IMR-90 (cell line): ENCODE measurements at regions of chr12 and their contacts with region 1.

Region 1: DNA sequence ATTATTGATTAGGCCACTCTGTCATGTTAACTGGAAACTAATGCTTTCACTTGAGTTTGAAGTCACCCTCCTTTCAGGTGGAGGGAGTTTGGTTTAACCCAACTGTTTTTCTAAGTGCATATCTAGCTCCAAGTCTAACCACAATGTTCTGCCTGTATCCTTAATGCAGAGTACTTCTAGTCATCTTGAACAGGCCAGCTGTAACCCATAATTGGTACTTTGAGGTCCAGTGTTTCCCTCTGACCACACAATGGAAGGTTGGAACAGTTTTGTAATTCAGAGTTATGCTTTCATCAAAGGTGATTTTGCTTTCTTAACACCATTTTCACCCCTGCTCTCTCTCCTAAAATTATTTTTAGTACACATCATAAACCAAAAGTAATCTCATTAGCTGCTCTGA is 237.2 kb upstream of the DCN start:
- DNase-seq: no peak
- ATAC-seq: no peak
- H3K4me3 ChIP-seq: no peak overlapping the region
- H3K27ac ChIP-seq: no peak overlapping the region
- H3K4me1 ChIP-seq: no peaks in the 10 kb centered on the region; the same call in 1 of the 2 replicates
- H3K27me3 ChIP-seq: peaks cover 5% of the 10 kb centered on the region
- CTCF ChIP-seq: no peak
- POLR2A ChIP-seq: no peak
- RAD21 ChIP-seq: no peak

Region 2: GRCh38 chr12:91316907-91317269 is 102.9 kb before region 1 on chr12:
- CTCF ChIA-PET with region 1: no interaction called
- POLR2A ChIA-PET with region 1: no interaction called
- dilution Hi-C with region 1: no loop called
- in situ Hi-C with region 1: no loop called
- intact Hi-C with region 1: no loop called
- DNase-seq: peak; percentile 69
- ATAC-seq: peak; percentile 84
- H3K4me3 ChIP-seq: no peak overlapping the region
- H3K27ac ChIP-seq: peak overlapping the region; percentile 93; the same call in 1 of the 2 replicates
- H3K4me1 ChIP-seq: peaks cover 8% of the 10 kb centered on the region
- H3K27me3 ChIP-seq: no peaks in the 10 kb centered on the region
- CTCF ChIP-seq: no peak
- POLR2A ChIP-seq: no peak
- RAD21 ChIP-seq: no peak

Region 3: GRCh38 chr12:91502208-91502607 is 82.4 kb after region 1 on chr12:
- CTCF ChIA-PET with region 1: no interaction called
- POLR2A ChIA-PET with region 1: no interaction called
- dilution Hi-C with region 1: no loop called
- in situ Hi-C with region 1: no loop called
- intact Hi-C with region 1: loop called (anchors 5 kb)
- DNase-seq: no peak
- ATAC-seq: no peak
- H3K4me3 ChIP-seq: no peak overlapping the region
- H3K27ac ChIP-seq: no peak overlapping the region
- H3K4me1 ChIP-seq: no peaks in the 10 kb centered on the region
- H3K27me3 ChIP-seq: no peaks in the 10 kb centered on the region; the same call in 1 of the 2 replicates
- CTCF ChIP-seq: no peak
- POLR2A ChIP-seq: no peak
- RAD21 ChIP-seq: no peak

Region 4: DNA sequence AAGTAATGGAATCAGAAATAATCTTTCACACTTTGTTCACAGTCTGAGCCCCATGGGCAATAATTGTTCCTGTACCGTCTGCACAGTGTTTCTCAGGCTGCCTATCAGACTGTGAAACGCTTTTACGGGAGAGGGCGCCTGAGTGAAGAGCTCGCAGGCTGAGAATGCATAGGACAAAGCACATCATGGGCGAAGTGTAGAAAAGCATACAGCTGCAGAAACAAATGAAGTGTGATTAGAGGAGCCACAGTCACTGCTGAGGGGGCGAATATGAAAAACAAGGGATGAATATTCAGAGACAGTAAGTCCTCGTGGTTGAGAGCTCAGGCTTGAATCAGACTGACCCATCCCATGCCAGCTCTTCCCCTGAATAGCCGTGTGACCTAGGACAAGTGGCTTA is 201.2 kb after region 1 on chr12:
- CTCF ChIA-PET with region 1: no interaction called
- POLR2A ChIA-PET with region 1: no interaction called
- dilution Hi-C with region 1: no loop called
- in situ Hi-C with region 1: no loop called
- intact Hi-C with region 1: no loop called
- DNase-seq: peak; percentile 12
- ATAC-seq: peak; percentile 85
- H3K4me3 ChIP-seq: no peak overlapping the region
- H3K27ac ChIP-seq: no peak overlapping the region
- H3K4me1 ChIP-seq: no peaks in the 10 kb centered on the region
- H3K27me3 ChIP-seq: no peaks in the 10 kb centered on the region; the same call in 1 of the 2 replicates
- CTCF ChIP-seq: no peak; the same call in 1 of the 2 replicates
- POLR2A ChIP-seq: no peak
- RAD21 ChIP-seq: no peak

Region 5: DNA sequence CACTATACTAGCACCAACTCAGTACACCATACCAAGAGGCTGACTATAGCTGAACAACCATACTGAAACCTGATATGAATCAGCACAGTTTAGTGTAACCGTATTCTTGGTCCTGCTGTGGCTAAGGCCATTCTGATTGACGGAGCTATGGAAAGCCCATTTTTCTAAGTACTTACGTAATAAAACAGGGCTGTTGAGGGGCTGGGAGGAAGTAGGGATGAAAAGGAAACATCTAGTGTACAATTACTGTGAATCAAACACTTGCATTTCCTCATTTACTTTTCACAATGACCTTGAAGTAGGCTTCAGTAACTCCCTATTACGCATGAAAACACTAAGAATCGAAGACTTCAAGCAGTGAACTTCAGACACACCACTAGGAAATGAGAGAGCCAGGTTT is 527.6 kb after region 1 on chr12:
- CTCF ChIA-PET with region 1: no interaction called
- POLR2A ChIA-PET with region 1: no interaction called
- dilution Hi-C with region 1: no loop called
- in situ Hi-C with region 1: no loop called
- intact Hi-C with region 1: no loop called
- DNase-seq: no peak
- ATAC-seq: no peak
- H3K4me3 ChIP-seq: no peak overlapping the region
- H3K27ac ChIP-seq: no peak overlapping the region
- H3K4me1 ChIP-seq: no peaks in the 10 kb centered on the region
- H3K27me3 ChIP-seq: no peaks in the 10 kb centered on the region
- CTCF ChIP-seq: no peak
- POLR2A ChIP-seq: no peak
- RAD21 ChIP-seq: no peak